ENCODE measurements at regions of chr7 and their contacts with region 1.

Region 1: GRCh38 chr7:40507166-40507565 is 372.4 kb downstream of the SUGCT start:
- DNase-seq: peak; percentile 57
- ATAC-seq: peak; percentile 51; the same call in 1 of the 2 replicates
- H3K4me3 ChIP-seq: no peak overlapping the region
- H3K27ac ChIP-seq: no peak overlapping the region
- H3K4me1 ChIP-seq: no peaks in the 10 kb centered on the region
- H3K27me3 ChIP-seq: no peaks in the 10 kb centered on the region
- CTCF ChIP-seq: peak; percentile 65

Region 2: DNA sequence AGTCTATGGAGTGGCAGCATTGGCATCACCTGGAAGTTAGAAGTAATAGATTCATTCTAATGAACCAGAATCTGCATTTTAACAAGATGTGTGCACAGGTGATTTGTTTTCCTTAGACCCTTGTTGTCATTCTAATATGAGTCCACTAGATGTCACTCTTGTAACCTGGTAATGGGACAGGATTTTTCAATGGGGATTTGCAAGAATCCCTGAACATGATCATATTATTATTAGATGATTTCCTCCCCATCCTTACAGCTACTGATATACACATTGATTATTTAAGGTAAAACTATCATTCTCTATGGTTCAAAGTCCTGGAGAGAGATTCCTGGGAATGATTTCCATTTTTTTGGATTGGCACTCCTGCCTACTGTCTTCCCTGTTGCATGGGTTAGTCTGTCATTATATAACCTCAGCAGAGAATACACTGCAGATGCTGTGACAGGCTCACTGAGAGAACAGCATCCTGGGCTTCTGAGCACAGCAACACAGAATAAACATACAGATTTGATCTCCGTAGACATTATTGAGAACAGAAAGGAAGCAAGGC is 177.5 kb before region 1 on chr7:
- CTCF ChIA-PET with region 1: no interaction called
- POLR2A ChIA-PET with region 1: no interaction called
- intact Hi-C with region 1: no loop called
- DNase-seq: peak; percentile 75
- ATAC-seq: peak; percentile 62
- H3K4me3 ChIP-seq: no peak overlapping the region
- H3K27ac ChIP-seq: no peak overlapping the region
- H3K4me1 ChIP-seq: no peaks in the 10 kb centered on the region
- H3K27me3 ChIP-seq: no peaks in the 10 kb centered on the region
- CTCF ChIP-seq: peak; percentile 77

Region 3: DNA sequence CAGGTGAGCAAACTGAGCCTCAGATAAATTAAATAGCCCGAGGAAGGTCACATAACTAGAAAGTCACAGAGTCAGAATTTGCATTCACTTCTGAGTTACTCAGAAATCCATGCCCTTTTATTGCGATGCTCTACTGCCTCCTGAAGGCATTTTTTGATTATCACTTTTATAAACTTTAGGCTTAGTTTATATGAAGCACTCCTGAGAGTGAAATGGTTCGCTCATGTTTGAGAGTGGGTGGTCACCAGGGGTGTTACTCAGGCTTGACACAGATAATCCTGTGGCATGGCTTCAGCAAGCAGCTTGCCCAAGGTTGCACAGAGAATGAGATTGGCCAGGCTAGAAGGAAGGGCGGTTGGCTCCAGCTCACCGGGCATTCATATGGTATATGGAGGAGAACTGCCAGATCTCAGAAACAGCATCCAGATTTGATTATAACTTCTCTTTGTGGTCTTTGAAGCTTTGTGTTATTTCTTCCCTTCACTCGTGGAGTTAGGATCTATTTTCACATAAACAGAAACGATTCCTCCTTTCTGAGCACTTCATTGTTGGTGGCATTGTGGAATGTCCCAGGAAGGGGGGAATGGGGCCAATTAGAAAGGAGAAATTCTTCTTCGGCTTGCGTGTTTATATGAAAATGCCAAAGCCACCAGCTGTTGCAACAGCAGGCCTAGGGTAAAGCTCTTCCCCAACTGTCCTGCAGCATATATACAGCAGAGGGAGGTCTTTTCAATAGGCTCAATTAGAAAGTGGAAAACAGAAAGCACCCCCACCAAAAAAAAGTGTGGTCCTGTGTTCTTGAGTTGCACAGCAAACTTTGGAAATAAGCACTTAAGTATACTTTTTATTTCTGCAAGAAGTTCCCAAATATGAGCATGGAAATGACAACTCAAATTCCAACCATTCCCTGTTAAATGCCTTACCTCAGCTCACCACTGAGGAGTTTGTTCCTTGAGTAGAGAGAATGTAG is 256.4 kb after region 1 on chr7:
- CTCF ChIA-PET with region 1: no interaction called
- POLR2A ChIA-PET with region 1: no interaction called
- intact Hi-C with region 1: loop called (anchors 5 kb)
- DNase-seq: peak; percentile 33
- ATAC-seq: peak; percentile 71
- H3K4me3 ChIP-seq: no peak overlapping the region
- H3K27ac ChIP-seq: no peak overlapping the region
- H3K4me1 ChIP-seq: no peaks in the 10 kb centered on the region
- H3K27me3 ChIP-seq: no peaks in the 10 kb centered on the region
- CTCF ChIP-seq: peak; percentile 27

Region 4: DNA sequence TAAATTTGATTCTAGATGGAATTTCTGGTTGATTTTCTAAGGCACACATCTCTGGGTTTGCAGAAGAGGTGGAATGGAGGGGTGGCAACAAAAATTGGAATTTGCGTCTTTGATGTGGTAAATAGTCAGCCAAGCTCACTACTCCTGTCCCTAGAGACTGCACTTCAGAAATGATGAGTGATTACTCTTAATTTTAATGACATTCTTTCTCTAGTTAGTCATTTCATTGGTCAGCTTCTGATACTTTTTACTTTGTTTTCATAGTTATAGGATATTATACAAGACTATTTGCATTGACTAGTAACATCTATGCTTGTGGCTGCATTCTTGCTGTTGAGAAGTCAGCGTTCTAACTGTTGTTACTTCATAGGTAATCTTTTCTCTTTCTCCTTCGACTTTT is 286.0 kb after region 1 on chr7:
- CTCF ChIA-PET with region 1: no interaction called
- POLR2A ChIA-PET with region 1: no interaction called
- intact Hi-C with region 1: no loop called
- DNase-seq: peak; percentile 71
- ATAC-seq: peak; percentile 95
- H3K4me3 ChIP-seq: no peak overlapping the region
- H3K27ac ChIP-seq: no peak overlapping the region
- H3K4me1 ChIP-seq: peaks cover 8% of the 10 kb centered on the region; the same call in 1 of the 2 replicates
- H3K27me3 ChIP-seq: no peaks in the 10 kb centered on the region
- CTCF ChIP-seq: no peak

Region 5: GRCh38 chr7:41731492-41732435 is 1224.6 kb after region 1 on chr7:
- CTCF ChIA-PET with region 1: no interaction called
- POLR2A ChIA-PET with region 1: no interaction called
- intact Hi-C with region 1: loop called (anchors 10 kb)
- DNase-seq: peak; percentile 44
- ATAC-seq: no peak
- H3K4me3 ChIP-seq: no peak overlapping the region
- H3K27ac ChIP-seq: no peak overlapping the region
- H3K4me1 ChIP-seq: peaks cover 17% of the 10 kb centered on the region
- H3K27me3 ChIP-seq: no peaks in the 10 kb centered on the region
- CTCF ChIP-seq: peak; percentile 75